ENCODE measurements at regions of chr15 and their contacts with region 1.

Region 1: GRCh38 chr15:98518823-98519561 is 129.3 kb upstream of the IGF1R start:
- DNase-seq: peak in 34 of 35 experiments; percentile 2 to 83 (median 28)
- ATAC-seq: peak; percentile 53 to 81 (median 66)
- H3K4me3 ChIP-seq: no peak overlapping the region
- H3K4me3 Mint-ChIP-seq: no peak overlapping the region
- H3K27ac ChIP-seq: no peak overlapping the region
- H3K27ac Mint-ChIP-seq: no peak overlapping the region
- H3K4me1 ChIP-seq: no peaks in the 10 kb centered on the region
- H3K4me1 Mint-ChIP-seq: peaks cover 5 to 7% (median 6%) of the 10 kb centered on the region in 3 donors
- H3K27me3 ChIP-seq: no peaks in the 10 kb centered on the region
- H3K27me3 Mint-ChIP-seq: peaks cover 0 to 5% of the 10 kb centered on the region in 2 donors

Region 2: DNA sequence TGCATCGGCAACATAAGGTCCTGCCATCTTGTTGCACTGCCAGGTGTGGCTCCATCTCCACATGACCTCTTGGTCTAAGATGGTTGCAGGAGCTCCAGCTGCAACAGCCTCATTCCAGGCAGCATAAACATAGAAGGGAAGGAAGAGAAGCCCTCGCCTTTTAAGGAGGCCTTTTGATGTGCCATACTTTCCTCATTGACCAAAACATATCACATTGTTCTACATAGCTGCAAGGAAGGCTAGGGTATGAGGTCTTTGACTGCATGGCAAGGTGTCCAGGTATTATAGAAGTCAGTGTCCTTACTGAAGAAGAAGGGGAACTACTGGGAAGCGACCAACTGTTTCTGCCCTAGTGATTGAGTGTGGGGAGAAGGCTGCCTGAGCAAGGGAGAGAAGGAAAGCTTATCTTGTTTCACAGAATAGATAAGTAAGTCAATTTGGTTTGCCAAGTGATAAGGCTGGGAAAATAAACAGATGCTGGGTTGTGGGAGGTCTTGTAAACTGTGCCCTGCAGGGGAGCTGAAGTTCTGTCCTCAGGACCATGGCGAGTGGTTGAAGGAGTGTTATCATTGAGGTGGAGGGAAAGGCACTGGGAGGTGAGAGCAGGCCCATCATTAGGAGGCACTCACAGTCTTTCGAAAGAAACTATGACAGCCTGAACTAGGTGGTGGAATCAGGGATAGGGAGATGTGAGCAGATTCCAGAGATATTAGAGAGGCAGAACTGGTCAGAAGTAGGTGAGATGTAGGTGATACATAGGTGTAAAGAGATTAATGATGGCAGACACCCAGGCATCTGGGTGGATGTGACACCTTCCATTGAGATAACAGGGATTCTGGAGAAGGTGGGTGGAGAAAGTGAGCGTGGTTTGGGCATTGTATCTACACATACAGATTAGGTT is 35.5 kb after region 1 on chr15:
- CTCF ChIA-PET with region 1: no interaction called
- POLR2A ChIA-PET with region 1: no interaction called
- DNase-seq: no peak
- ATAC-seq: no peak
- H3K4me3 ChIP-seq: no peak overlapping the region
- H3K4me3 Mint-ChIP-seq: no peak overlapping the region
- H3K27ac ChIP-seq: no peak overlapping the region
- H3K27ac Mint-ChIP-seq: no peak overlapping the region
- H3K4me1 ChIP-seq: no peaks in the 10 kb centered on the region
- H3K4me1 Mint-ChIP-seq: no peaks in the 10 kb centered on the region
- H3K27me3 ChIP-seq: peaks cover 0 to 7% of the 10 kb centered on the region in 2 experiments
- H3K27me3 Mint-ChIP-seq: peaks cover 5 to 9% of the 10 kb centered on the region in 2 donors

Region 3: GRCh38 chr15:98658831-98659699 is 140.1 kb after region 1 on chr15:
- CTCF ChIA-PET with region 1: interaction called, 10 to 19 read pairs
- POLR2A ChIA-PET with region 1: no interaction called
- DNase-seq: peak in 14 of 35 experiments; percentile 6 to 70 (median 20)
- ATAC-seq: peak; percentile 52 to 86 (median 78)
- H3K4me3 ChIP-seq: no peak overlapping the region
- H3K4me3 Mint-ChIP-seq: no peak overlapping the region
- H3K27ac ChIP-seq: no peak overlapping the region
- H3K27ac Mint-ChIP-seq: no peak overlapping the region
- H3K4me1 ChIP-seq: peaks cover 3 to 10% of the 10 kb centered on the region in 2 experiments
- H3K4me1 Mint-ChIP-seq: peaks cover 56 to 68% (median 58%) of the 10 kb centered on the region in 3 donors
- H3K27me3 ChIP-seq: peaks cover 0 to 5% of the 10 kb centered on the region in 2 experiments
- H3K27me3 Mint-ChIP-seq: peaks cover 0 to 13% of the 10 kb centered on the region in 2 donors

Region 4: DNA sequence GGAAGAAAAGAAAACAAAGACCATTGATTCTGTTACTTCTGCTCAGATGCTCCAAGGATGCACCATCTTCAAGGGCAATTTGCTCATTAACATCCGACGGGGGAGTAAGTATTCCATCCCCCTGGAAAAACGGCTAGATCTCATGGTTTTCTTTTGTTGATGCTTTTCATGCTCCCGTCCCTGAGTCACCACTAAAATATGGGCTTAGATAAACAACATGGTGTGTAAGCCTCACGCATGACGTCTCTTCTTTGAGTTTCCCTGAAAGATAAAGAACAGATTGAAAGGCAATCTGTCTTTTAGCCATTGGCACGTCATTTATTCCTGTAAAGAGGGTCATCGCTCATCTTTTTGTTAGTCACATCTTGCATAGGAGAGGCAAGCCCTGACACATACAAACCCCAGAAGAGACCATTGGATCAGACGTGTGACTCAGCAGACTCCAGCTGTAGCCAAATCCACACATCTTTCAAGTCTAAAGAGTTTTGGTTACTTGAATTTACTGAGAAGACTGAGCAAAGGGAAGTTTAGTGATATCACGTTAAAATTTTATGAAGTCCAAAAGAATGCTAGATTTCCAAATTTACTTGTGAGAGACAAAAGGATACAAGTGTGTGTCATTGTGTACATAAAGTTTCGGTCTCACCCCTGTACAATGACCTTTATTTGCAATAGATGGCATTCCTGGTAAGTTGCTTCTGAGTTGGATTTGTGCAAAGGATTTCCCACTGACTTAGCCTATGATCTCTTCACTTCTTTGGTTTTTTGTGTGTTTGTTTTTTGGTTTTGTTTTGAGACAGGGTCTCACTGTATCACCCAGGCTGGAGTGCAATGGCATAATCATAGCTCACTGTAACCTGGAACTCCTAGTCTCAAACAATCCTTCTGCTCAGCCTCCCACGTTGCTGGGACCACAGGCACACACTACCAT is 378.1 kb after region 1 on chr15:
- CTCF ChIA-PET with region 1: no interaction called
- POLR2A ChIA-PET with region 1: no interaction called
- DNase-seq: no peak
- ATAC-seq: no peak
- H3K4me3 ChIP-seq: no peak overlapping the region
- H3K4me3 Mint-ChIP-seq: no peak overlapping the region
- H3K27ac ChIP-seq: no peak overlapping the region
- H3K27ac Mint-ChIP-seq: no peak overlapping the region
- H3K4me1 ChIP-seq: no peaks in the 10 kb centered on the region
- H3K4me1 Mint-ChIP-seq: peaks cover 6 to 9% (median 7%) of the 10 kb centered on the region in 3 donors
- H3K27me3 ChIP-seq: no peaks in the 10 kb centered on the region
- H3K27me3 Mint-ChIP-seq: no peaks in the 10 kb centered on the region

Region 5: GRCh38 chr15:98952381-98952803 is 433.4 kb after region 1 on chr15:
- CTCF ChIA-PET with region 1: no interaction called
- POLR2A ChIA-PET with region 1: interaction called in 1 of 2 experiments, 11 read pairs
- DNase-seq: peak in 1 of 35 experiments; percentile 6
- ATAC-seq: peak in 1 of 4 experiments; percentile 40
- H3K4me3 ChIP-seq: no peak overlapping the region
- H3K4me3 Mint-ChIP-seq: peak overlapping the region in 2 of 3 donors; percentile 28 to 33
- H3K27ac ChIP-seq: peak overlapping the region; percentile 14
- H3K27ac Mint-ChIP-seq: peak overlapping the region; percentile 66 to 83
- H3K4me1 ChIP-seq: peaks cover 0 to 22% of the 10 kb centered on the region in 2 experiments
- H3K4me1 Mint-ChIP-seq: peaks cover 20 to 27% (median 23%) of the 10 kb centered on the region in 3 donors
- H3K27me3 ChIP-seq: peaks cover 0 to 2% of the 10 kb centered on the region in 2 experiments
- H3K27me3 Mint-ChIP-seq: no peaks in the 10 kb centered on the region